Mammary epithelial cell (primary cell): ENCODE measurements at regions of chr7 and their contacts with region 1.

Region 1: DNA sequence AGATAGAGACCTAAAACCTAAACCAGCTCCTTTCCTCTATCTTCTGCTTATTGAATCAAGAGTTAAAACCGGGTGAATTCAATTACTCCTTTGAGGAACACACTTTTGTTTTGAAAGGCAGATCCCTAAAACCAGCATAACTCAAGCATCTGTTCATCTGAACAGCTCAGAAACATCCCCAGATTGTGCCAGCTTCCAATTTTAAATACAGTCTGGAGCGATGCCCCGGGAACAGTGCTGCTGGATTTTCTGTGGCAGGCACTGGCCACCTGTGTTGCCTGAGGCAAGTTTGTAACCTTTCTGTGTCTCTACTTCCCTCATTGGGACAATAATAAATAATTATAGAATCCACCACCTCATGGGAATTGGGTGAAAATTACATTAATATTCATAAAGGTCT is 281.4 kb upstream of the NFE2L3 start:
- DNase-seq: no peak
- H3K4me3 ChIP-seq: no peak overlapping the region
- H3K27ac ChIP-seq: no peak overlapping the region
- H3K4me1 ChIP-seq: no peaks in the 10 kb centered on the region
- H3K27me3 ChIP-seq: peaks cover 10% of the 10 kb centered on the region
- CTCF ChIP-seq: no peak

Region 2: DNA sequence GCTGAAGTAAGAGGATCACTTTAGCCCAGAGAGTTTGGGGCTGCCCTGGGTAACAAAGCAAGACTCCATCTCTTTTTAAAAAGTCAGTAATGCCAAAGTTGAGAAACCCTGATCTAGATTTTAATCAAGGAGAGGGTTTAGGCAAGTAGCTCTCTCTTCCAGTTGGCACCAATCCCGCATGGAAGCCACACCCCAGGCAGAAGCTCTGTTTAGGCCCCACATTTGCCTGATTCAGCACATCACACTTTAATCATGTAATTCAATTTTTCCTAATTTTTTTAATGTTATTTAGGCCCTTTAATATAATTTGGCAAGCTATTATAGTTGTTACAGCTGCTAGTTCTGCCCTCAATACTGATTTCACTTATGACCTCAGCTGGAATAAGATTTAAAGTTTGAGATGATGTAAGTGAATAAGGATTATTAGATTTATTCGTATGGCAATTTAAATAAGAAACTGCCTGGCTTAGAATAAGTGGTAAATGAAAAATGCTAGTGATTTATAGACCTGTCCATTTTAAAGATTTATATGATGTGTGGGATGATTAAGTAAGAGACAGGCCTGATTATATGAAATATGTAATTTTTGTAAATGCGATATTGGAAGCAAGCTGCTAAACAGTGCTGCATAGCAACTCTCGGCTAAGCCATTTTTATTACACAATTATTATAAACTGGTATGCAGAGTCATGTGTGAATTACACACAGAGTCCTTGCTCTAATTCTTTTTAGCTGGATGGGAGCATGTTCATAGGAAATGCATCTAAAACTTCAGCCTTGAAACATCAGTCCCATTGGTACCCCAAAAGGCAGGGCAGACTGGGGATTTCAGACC is 201.3 kb after region 1 on chr7:
- CTCF ChIA-PET with region 1: no interaction called
- dilution Hi-C with region 1: loop called (anchors 5 kb)
- in situ Hi-C with region 1: no loop called
- intact Hi-C with region 1: no loop called
- DNase-seq: no peak
- H3K4me3 ChIP-seq: no peak overlapping the region
- H3K27ac ChIP-seq: no peak overlapping the region
- H3K4me1 ChIP-seq: no peaks in the 10 kb centered on the region
- H3K27me3 ChIP-seq: no peaks in the 10 kb centered on the region
- CTCF ChIP-seq: no peak